ENCODE measurements at regions of chr17 and their contacts with region 1.

Region 1: GRCh38 chr17:8740486-8740885 is 4.2 kb downstream of the CCDC42 start:
- DNase-seq: peak in 1 of 2 donors; percentile 28
- H3K4me3 ChIP-seq: peak overlapping the region in 1 of 4 donors; percentile 6
- H3K27ac ChIP-seq: no peak overlapping the region
- H3K4me1 ChIP-seq: peaks cover 0 to 8% (median 5%) of the 10 kb centered on the region in 4 donors
- H3K27me3 ChIP-seq: peaks cover 0 to 33% (median 0%) of the 10 kb centered on the region in 3 donors
- CTCF ChIP-seq: no peak
- EP300 ChIP-seq: no peak
- POLR2A ChIP-seq: no peak

Region 2: GRCh38 chr17:8409966-8410864 is 330.3 kb before region 1 on chr17:
- intact Hi-C with region 1: loop called (anchors 5 kb)
- DNase-seq: peak; percentile 93 to 96
- H3K4me3 ChIP-seq: peak overlapping the region in 1 of 4 donors; percentile 2
- H3K27ac ChIP-seq: peak overlapping the region in 1 of 5 donors; percentile 7
- H3K4me1 ChIP-seq: peaks cover 0 to 19% (median 4%) of the 10 kb centered on the region in 4 donors
- H3K27me3 ChIP-seq: peaks cover 0 to 46% (median 0%) of the 10 kb centered on the region in 3 donors
- CTCF ChIP-seq: peak in 5 of 7 experiments; percentile 81 to 93 (median 88)
- EP300 ChIP-seq: no peak
- POLR2A ChIP-seq: no peak

Region 3: GRCh38 chr17:8630802-8631553 is 109.5 kb before region 1 on chr17:
- intact Hi-C with region 1: no loop called
- DNase-seq: peak; percentile 98 to 100
- H3K4me3 ChIP-seq: peak overlapping the region; percentile 73 to 88 (median 80)
- H3K27ac ChIP-seq: peak overlapping the region; percentile 63 to 91 (median 83)
- H3K4me1 ChIP-seq: peaks cover 9 to 39% (median 30%) of the 10 kb centered on the region in 4 donors
- H3K27me3 ChIP-seq: peaks cover 0 to 55% (median 27%) of the 10 kb centered on the region in 3 donors
- CTCF ChIP-seq: peak in 3 of 7 experiments; percentile 13 to 31 (median 21)
- EP300 ChIP-seq: no peak
- POLR2A ChIP-seq: no peak